Caco-2 (cell line): ENCODE measurements at regions of chr14 and their contacts with region 1.

Region 1: GRCh38 chr14:93655078-93655750 is 133.1 kb downstream of the PRIMA1 start:
- DNase-seq: peak; percentile 32 to 67
- H3K4me3 ChIP-seq: no peak overlapping the region
- H3K4me3 Mint-ChIP-seq: no peak overlapping the region
- H3K27ac Mint-ChIP-seq: no peak overlapping the region
- H3K4me1 ChIP-seq: no peaks in the 10 kb centered on the region
- H3K4me1 Mint-ChIP-seq: no peaks in the 10 kb centered on the region
- H3K27me3 ChIP-seq: no peaks in the 10 kb centered on the region
- H3K27me3 Mint-ChIP-seq: peaks cover 6% of the 10 kb centered on the region
- CTCF ChIP-seq: peak; percentile 38 to 48

Region 2: GRCh38 chr14:93566065-93566693 is 89.0 kb before region 1 on chr14:
- CTCF ChIA-PET with region 1: no interaction called
- POLR2A ChIA-PET with region 1: no interaction called
- intact Hi-C with region 1: no loop called
- DNase-seq: peak in 1 of 2 experiments; percentile 43
- H3K4me3 ChIP-seq: no peak overlapping the region
- H3K4me3 Mint-ChIP-seq: no peak overlapping the region
- H3K27ac Mint-ChIP-seq: peak overlapping the region; percentile 12
- H3K4me1 ChIP-seq: peaks cover 13% of the 10 kb centered on the region
- H3K4me1 Mint-ChIP-seq: peaks cover 27% of the 10 kb centered on the region
- H3K27me3 ChIP-seq: no peaks in the 10 kb centered on the region
- H3K27me3 Mint-ChIP-seq: peaks cover 2% of the 10 kb centered on the region
- CTCF ChIP-seq: no peak

Region 3: DNA sequence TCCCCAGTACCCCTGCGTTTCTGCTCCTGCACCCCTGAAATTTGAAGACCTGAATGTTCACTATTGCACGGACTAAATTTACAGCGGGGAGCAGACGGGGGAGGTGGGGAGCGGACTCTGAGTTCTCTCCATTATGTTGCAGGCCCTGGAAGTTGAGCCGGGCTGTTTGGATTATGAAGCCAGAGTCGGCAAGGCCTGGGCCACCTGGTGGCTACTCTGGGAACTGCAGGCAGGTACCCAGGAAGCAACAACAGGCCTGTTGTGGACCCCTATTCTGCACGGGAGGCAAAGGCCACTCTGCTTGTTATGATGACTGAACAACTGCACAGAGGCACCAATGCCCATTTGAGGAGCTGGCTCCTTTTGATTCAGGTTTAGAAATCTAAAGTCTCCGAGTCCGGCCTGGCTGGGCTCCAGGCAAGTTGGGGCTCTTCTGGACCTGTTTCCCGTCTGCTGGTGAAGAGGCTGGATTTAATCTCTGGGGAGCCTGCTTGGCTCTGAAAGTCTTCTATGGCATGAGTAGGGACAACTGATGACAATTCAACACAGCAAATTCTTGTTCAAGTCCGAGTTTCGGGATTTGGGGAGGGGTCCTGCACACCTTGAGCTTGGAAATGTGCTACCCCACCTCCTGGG is 237.8 kb after region 1 on chr14:
- CTCF ChIA-PET with region 1: interaction called, 5 read pairs
- POLR2A ChIA-PET with region 1: no interaction called
- intact Hi-C with region 1: loop called (anchors 1 kb)
- DNase-seq: peak; percentile 68 to 80
- H3K4me3 ChIP-seq: no peak overlapping the region
- H3K4me3 Mint-ChIP-seq: no peak overlapping the region
- H3K27ac Mint-ChIP-seq: no peak overlapping the region
- H3K4me1 ChIP-seq: no peaks in the 10 kb centered on the region; the same call in 1 of the 2 replicates
- H3K4me1 Mint-ChIP-seq: no peaks in the 10 kb centered on the region
- H3K27me3 ChIP-seq: no peaks in the 10 kb centered on the region
- H3K27me3 Mint-ChIP-seq: peaks cover 11% of the 10 kb centered on the region
- CTCF ChIP-seq: peak; percentile 93 to 95

Region 4: DNA sequence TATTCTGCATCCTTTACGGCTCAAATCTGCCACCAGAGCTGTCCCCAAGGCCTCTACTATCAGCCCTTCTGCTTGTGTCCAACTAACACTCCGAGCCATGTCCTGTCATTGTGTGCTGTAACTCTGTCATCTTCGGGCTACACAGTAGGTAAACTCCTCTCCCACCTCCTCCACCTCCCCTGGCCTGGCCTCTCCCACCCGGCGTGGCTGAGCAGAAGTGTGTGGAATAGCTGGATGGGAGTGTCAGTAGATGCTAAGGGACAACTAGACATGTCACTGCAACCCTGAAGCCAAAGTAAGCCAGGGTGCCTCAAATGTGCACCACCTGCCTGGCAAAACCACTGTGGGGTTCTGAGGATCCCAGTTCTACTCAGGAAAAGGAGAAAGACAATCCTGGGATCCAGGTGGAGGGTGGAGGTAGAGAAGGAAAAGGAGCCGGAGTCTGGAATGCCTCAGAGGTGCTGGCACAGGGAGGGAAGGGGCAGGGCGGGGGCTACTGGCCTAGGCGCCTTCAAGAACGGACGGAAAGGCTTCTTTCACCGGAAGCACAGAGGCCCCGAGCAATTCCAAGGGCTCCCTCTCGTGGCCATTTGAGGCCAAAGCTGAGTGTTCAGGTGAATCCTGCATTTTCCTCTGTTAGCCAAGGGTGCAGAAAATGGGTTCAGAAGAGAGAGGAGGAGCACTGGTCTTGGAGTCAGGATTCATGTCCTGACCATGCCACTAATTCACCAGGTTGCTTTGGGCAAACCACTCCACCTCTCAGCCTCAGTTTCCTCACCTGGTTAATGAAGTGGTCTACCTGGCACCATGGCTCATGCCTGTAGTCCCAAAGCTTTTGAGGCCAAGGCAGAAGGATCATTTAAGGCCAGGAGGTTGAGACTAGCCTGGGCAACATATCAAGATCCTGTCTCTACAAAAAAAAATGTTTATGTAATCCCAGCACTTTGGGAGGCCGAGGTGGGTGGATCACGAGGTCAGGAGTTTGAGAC is 251.4 kb after region 1 on chr14:
- CTCF ChIA-PET with region 1: interaction called, 9 read pairs
- POLR2A ChIA-PET with region 1: no interaction called
- intact Hi-C with region 1: loop called (anchors 1 kb)
- DNase-seq: peak; percentile 64 to 68
- H3K4me3 ChIP-seq: no peak overlapping the region
- H3K4me3 Mint-ChIP-seq: no peak overlapping the region
- H3K27ac Mint-ChIP-seq: no peak overlapping the region
- H3K4me1 ChIP-seq: peaks cover 14% of the 10 kb centered on the region
- H3K4me1 Mint-ChIP-seq: peaks cover 16% of the 10 kb centered on the region
- H3K27me3 ChIP-seq: no peaks in the 10 kb centered on the region
- H3K27me3 Mint-ChIP-seq: peaks cover 3% of the 10 kb centered on the region
- CTCF ChIP-seq: peak; percentile 69 to 74

Region 5: GRCh38 chr14:93939304-93940229 is 284.4 kb after region 1 on chr14:
- CTCF ChIA-PET with region 1: interaction called, 3 read pairs
- POLR2A ChIA-PET with region 1: no interaction called
- intact Hi-C with region 1: loop called (anchors 1 kb)
- DNase-seq: peak in 1 of 2 experiments; percentile 57
- H3K4me3 ChIP-seq: no peak overlapping the region
- H3K4me3 Mint-ChIP-seq: no peak overlapping the region
- H3K27ac Mint-ChIP-seq: no peak overlapping the region
- H3K4me1 ChIP-seq: no peaks in the 10 kb centered on the region
- H3K4me1 Mint-ChIP-seq: no peaks in the 10 kb centered on the region
- H3K27me3 ChIP-seq: no peaks in the 10 kb centered on the region
- H3K27me3 Mint-ChIP-seq: no peaks in the 10 kb centered on the region
- CTCF ChIP-seq: peak in 1 of 2 experiments; percentile 48

Region 6: GRCh38 chr14:94001501-94002396 is 346.5 kb after region 1 on chr14:
- CTCF ChIA-PET with region 1: interaction called, 4 read pairs
- POLR2A ChIA-PET with region 1: no interaction called
- intact Hi-C with region 1: loop called (anchors 10 kb)
- DNase-seq: peak; percentile 62
- H3K4me3 ChIP-seq: no peak overlapping the region
- H3K4me3 Mint-ChIP-seq: no peak overlapping the region
- H3K27ac Mint-ChIP-seq: no peak overlapping the region
- H3K4me1 ChIP-seq: peaks cover 14% of the 10 kb centered on the region
- H3K4me1 Mint-ChIP-seq: peaks cover 22% of the 10 kb centered on the region
- H3K27me3 ChIP-seq: no peaks in the 10 kb centered on the region
- H3K27me3 Mint-ChIP-seq: no peaks in the 10 kb centered on the region
- CTCF ChIP-seq: peak; percentile 91 to 94